ENCODE measurements at regions of chr2 and their contacts with region 1.

Region 1: DNA sequence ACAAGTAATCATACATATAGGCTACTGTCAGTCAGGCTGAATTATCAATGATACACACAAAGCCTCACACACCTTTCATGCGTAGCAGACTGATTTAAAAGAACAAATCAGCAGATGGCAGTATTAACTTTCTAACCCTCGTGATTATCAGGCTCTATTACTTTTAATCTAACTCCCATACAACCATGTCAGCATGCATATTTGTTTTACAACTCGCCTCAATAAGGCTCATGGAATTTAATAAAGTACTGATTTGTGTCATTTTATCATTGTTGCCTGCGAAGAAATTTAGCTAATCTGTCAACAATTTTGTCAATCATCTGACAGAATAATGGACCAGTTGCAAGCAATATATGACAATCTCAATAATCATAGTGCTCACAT is 82.8 kb downstream of the SLC25A12 start:
- DNase-seq: peak in 1 of 2 experiments; percentile 55
- H3K4me3 ChIP-seq: no peak overlapping the region
- H3K27ac ChIP-seq: no peak overlapping the region
- H3K4me1 ChIP-seq: peaks cover 19% of the 10 kb centered on the region
- H3K27me3 ChIP-seq: no peaks in the 10 kb centered on the region
- CTCF ChIP-seq: peak; percentile 70

Region 2: GRCh38 chr2:171104379-171104778 is 706.9 kb before region 1 on chr2:
- CTCF ChIA-PET with region 1: no interaction called
- POLR2A ChIA-PET with region 1: no interaction called
- intact Hi-C with region 1: loop called (anchors 2 kb)
- DNase-seq: no peak
- H3K4me3 ChIP-seq: no peak overlapping the region
- H3K27ac ChIP-seq: no peak overlapping the region
- H3K4me1 ChIP-seq: no peaks in the 10 kb centered on the region
- H3K27me3 ChIP-seq: no peaks in the 10 kb centered on the region
- CTCF ChIP-seq: no peak

Region 3: GRCh38 chr2:171598713-171599319 is 212.4 kb before region 1 on chr2:
- CTCF ChIA-PET with region 1: no interaction called
- POLR2A ChIA-PET with region 1: no interaction called
- intact Hi-C with region 1: loop called (anchors 5 kb)
- DNase-seq: peak; percentile 47 to 63
- H3K4me3 ChIP-seq: no peak overlapping the region
- H3K27ac ChIP-seq: no peak overlapping the region
- H3K4me1 ChIP-seq: no peaks in the 10 kb centered on the region
- H3K27me3 ChIP-seq: peaks cover 17% of the 10 kb centered on the region; the same call in 1 of the 2 replicates
- CTCF ChIP-seq: peak; percentile 100

Region 4: DNA sequence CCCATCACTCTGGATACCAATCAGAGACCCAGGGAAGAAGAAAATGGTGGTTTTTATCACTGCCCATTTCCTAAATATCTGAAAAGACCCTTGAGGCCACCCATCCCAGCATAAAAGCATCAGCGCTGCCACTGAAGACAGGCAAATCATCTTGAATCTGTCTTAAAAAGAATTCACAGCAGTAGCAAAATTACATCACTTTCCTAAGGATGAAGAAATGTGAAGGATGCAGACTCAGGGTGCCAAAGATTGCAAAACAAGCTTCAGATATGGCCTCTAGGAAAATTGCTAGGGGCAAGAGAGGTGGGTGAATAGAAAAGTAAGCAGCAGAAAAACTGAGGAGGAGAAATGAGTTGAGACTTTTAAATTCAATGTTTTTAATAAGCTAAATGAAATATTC is 12.8 kb after region 1 on chr2:
- CTCF ChIA-PET with region 1: no interaction called
- POLR2A ChIA-PET with region 1: interaction called, 14 read pairs
- intact Hi-C with region 1: no loop called
- DNase-seq: no peak
- H3K4me3 ChIP-seq: no peak overlapping the region
- H3K27ac ChIP-seq: no peak overlapping the region
- H3K4me1 ChIP-seq: no peaks in the 10 kb centered on the region
- H3K27me3 ChIP-seq: no peaks in the 10 kb centered on the region
- CTCF ChIP-seq: no peak

Region 5: GRCh38 chr2:171922230-171923022 is 111.2 kb after region 1 on chr2 and contains the start of gene HAT1:
- CTCF ChIA-PET with region 1: no interaction called
- POLR2A ChIA-PET with region 1: no interaction called
- intact Hi-C with region 1: loop called (anchors 5 kb)
- DNase-seq: peak; percentile 98 to 100
- H3K4me3 ChIP-seq: peak within 1 kb of the TSS; percentile 68
- H3K27ac ChIP-seq: peak within 1 kb of the TSS; percentile 52
- H3K4me1 ChIP-seq: peaks cover 25% of the 10 kb centered on the region
- H3K27me3 ChIP-seq: no peaks in the 10 kb centered on the region
- CTCF ChIP-seq: no peak
- total RNA-seq, gene HAT1: 96.4 and 132 TPM in 2 replicates

Region 6: DNA sequence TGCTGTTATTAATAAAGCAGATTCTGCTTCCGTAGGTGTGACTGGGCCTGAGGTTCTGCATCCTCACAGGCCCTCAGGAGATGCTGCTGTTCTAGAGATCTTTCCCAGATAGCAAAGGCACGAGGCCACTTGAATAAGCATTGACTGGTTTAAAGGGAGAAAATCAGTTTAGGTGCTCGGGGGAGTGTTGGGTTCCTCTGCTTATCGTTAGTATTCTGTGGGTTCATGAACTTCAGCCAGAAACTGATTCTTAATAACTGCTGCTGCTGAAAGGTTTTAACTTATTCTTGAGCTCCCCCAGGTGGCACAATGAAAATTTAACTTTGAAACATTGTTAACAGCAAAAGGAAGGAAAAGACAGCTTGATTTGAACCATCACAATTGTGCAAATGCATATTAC is 673.0 kb after region 1 on chr2:
- CTCF ChIA-PET with region 1: no interaction called
- POLR2A ChIA-PET with region 1: interaction called, 4 read pairs
- intact Hi-C with region 1: loop called (anchors 5 kb)
- DNase-seq: no peak
- H3K4me3 ChIP-seq: no peak overlapping the region
- H3K27ac ChIP-seq: no peak overlapping the region
- H3K4me1 ChIP-seq: 0 out of 2 replicates have a peak, but pooled peaks cover 5% of the 10 kb centered on the region
- H3K27me3 ChIP-seq: no peaks in the 10 kb centered on the region
- CTCF ChIP-seq: peak; percentile 89